ENCODE measurements at regions of chr5 and their contacts with region 1.

Region 1: GRCh38 chr5:57173185-57174127 is at the start of gene GPBP1:
- DNase-seq: peak; percentile 99
- H3K4me3 Mint-ChIP-seq: peak within 1 kb of the TSS; percentile 94
- H3K27ac Mint-ChIP-seq: peak within 1 kb of the TSS; percentile 97
- H3K4me1 Mint-ChIP-seq: peaks cover 19% of the 10 kb centered on the region
- H3K27me3 Mint-ChIP-seq: no peaks in the 10 kb centered on the region
- total RNA-seq, gene GPBP1: 91.5 to 91.9 TPM

Region 2: GRCh38 chr5:55534436-55535198 is 1638.8 kb before region 1 on chr5 and contains the start of gene PLPP1:
- CTCF ChIA-PET with region 1: no interaction called
- intact Hi-C with region 1: loop called (anchors 10 kb)
- DNase-seq: peak; percentile 83
- H3K4me3 Mint-ChIP-seq: peak within 1 kb of the TSS; percentile 82
- H3K27ac Mint-ChIP-seq: peak within 1 kb of the TSS; percentile 86
- H3K4me1 Mint-ChIP-seq: peaks cover 29% of the 10 kb centered on the region
- H3K27me3 Mint-ChIP-seq: no peaks in the 10 kb centered on the region
- total RNA-seq, gene PLPP1: 7.3 to 8.3 TPM

Region 3: GRCh38 chr5:56050551-56051255 is 1122.8 kb before region 1 on chr5:
- CTCF ChIA-PET with region 1: no interaction called
- intact Hi-C with region 1: loop called (anchors 10 kb)
- DNase-seq: no peak
- H3K4me3 Mint-ChIP-seq: peak overlapping the region; percentile 10
- H3K27ac Mint-ChIP-seq: peak overlapping the region; percentile 52
- H3K4me1 Mint-ChIP-seq: peaks cover 61% of the 10 kb centered on the region
- H3K27me3 Mint-ChIP-seq: no peaks in the 10 kb centered on the region

Region 4: DNA sequence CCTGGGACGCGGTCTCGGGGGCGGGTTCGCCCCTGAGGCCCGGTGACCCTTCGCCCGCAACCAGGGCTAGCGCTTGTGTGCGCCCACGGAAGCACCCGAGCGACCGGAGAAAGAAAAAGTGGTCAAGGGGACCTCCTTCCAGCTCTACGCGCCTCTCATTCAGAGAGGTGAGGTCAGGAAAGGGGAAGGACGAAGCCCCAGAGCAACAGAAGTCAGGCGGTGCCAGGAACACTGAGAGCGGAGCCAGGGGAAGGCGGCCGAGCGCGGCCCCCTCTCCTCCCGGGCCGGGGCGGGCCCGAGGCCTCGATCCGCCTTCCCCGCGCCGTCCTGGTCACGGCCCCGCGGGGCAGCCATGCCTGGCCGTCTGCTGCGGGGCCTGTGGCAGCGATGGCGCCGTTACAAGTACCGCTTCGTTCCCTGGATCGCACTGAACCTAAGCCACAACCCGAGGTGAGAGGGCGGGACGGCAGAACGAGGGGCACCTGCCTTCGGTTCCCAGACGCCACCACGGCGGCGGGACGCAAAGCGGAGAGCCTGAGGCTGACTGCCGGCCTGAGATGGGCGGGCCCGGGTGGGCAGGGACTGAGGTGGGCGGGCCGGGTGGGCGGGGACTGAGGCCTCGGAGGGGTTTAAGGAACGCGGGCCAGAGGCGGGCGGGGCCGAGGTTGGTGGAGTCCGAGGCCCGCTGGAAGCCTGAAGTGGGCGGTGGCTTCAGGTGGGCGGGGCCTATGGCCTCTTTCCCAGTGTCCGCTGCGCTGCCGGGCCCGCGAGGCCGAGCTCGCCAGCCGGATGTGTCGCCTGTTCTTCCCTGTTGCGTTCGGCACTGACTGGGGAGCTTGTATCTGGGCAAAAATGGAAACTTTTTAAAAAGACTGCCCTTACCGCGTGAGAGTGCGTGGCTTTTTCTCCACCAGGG is 263.9 kb before region 1 on chr5 and contains the start of gene SETD9:
- CTCF ChIA-PET with region 1: no interaction called
- intact Hi-C with region 1: loop called (anchors 1 kb)
- DNase-seq: peak; percentile 97
- H3K4me3 Mint-ChIP-seq: peak within 1 kb of the TSS; percentile 81
- H3K27ac Mint-ChIP-seq: peak within 1 kb of the TSS; percentile 94
- H3K4me1 Mint-ChIP-seq: peaks cover 19% of the 10 kb centered on the region
- H3K27me3 Mint-ChIP-seq: no peaks in the 10 kb centered on the region
- total RNA-seq, gene SETD9: 5.8 to 8.6 TPM

Region 5: GRCh38 chr5:57067597-57067924 is 105.9 kb before region 1 on chr5:
- CTCF ChIA-PET with region 1: no interaction called
- intact Hi-C with region 1: no loop called
- DNase-seq: no peak
- H3K4me3 Mint-ChIP-seq: no peak overlapping the region
- H3K27ac Mint-ChIP-seq: no peak overlapping the region
- H3K4me1 Mint-ChIP-seq: no peaks in the 10 kb centered on the region
- H3K27me3 Mint-ChIP-seq: peaks cover 8% of the 10 kb centered on the region

Region 6: DNA sequence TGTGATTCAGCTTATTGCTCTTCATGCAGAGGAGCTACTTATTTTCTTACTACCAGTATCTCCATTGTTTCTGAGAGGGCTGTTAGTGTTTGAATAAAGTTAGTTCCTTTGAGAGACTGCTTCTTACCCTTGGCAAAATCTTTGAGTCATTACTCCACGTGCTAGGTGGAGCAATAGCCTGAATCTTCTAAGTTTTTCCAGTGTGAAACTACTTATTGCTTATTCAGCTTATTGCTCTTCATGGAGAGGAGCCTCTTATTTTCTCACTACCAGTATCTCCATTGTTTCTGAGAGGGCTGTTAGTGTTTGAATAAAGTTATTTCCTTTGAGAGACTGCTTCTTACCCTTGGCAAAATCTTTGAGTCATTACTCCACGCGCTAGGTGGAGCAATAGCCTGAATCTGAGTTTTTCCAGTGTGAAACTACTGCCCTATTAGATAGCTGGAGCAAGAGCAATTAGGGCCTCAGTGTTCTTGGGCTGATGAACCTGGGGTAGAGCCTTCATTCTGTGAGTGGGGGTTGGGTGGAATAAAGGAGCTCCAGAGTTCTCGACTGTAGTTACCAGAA is 42.3 kb after region 1 on chr5:
- CTCF ChIA-PET with region 1: interaction called, 5 read pairs
- intact Hi-C with region 1: loop called (anchors 1 kb)
- DNase-seq: no peak
- H3K4me3 Mint-ChIP-seq: no peak overlapping the region
- H3K27ac Mint-ChIP-seq: peak overlapping the region; percentile 72
- H3K4me1 Mint-ChIP-seq: peaks cover 56% of the 10 kb centered on the region
- H3K27me3 Mint-ChIP-seq: no peaks in the 10 kb centered on the region

Region 7: GRCh38 chr5:59126708-59127573 is 1953.5 kb after region 1 on chr5:
- CTCF ChIA-PET with region 1: no interaction called
- intact Hi-C with region 1: loop called (anchors 10 kb)
- DNase-seq: no peak
- H3K4me3 Mint-ChIP-seq: no peak overlapping the region
- H3K27ac Mint-ChIP-seq: no peak overlapping the region
- H3K4me1 Mint-ChIP-seq: peaks cover 27% of the 10 kb centered on the region
- H3K27me3 Mint-ChIP-seq: no peaks in the 10 kb centered on the region